A673 (cell line): ENCODE measurements at regions of chr1 and their contacts with region 1.

Region 1: DNA sequence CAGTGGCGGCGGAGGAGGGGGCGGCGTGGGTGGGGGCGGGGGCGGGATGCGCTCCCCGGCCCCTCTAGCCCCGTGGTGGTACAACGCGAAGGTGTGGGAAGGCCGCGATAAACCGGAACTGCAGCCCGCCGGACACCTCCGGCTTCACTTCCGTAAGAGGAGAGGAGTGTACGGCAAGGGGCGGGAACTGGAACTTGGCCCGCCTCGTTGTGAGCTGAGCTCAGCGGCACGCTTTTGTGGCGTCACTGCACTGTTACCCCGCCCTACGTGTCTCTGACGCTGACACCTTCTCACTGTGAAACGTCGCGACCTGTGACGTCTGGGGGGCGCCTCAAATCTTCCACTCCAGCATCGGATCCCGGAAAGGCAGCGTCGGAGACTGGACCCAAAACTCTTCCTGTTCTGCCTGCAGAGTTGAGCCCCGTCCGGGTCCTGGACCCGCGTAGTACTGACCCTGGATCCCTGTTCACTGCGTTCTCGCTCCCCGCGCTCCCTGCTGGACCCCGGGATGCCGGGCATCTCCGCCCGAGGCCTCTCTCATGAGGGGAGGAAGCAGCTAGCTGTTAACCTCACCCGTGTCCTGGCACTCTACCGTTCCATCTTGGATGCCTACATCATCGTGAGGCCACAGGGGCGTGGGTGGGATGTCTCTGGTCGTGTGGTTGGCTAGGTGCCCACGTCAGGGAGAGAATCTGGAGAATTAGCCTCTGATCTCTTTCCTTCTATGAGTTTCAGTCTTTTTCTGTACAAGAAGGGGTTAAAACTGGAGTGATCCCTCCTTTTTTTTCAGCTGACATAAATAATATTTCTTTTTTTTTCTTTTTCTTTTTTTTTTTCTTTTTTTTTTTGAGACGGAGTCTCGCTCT is at the start of gene ISG20L2:
- DNase-seq: peak; percentile 99
- H3K4me3 ChIP-seq: peak within 1 kb of the TSS; percentile 95
- H3K27ac ChIP-seq: peak within 1 kb of the TSS; percentile 96
- H3K4me1 ChIP-seq: peaks cover 23% of the 10 kb centered on the region
- H3K27me3 ChIP-seq: no peaks in the 10 kb centered on the region
- CTCF ChIP-seq: no peak
- total RNA-seq, gene ISG20L2: 45.7 and 46.5 TPM in 2 replicates

Region 2: GRCh38 chr1:156445789-156446263 is 283.0 kb before region 1 on chr1:
- CTCF ChIA-PET with region 1: no interaction called
- POLR2A ChIA-PET with region 1: no interaction called
- intact Hi-C with region 1: no loop called
- DNase-seq: peak; percentile 92
- H3K4me3 ChIP-seq: no peak overlapping the region
- H3K27ac ChIP-seq: no peak overlapping the region
- H3K4me1 ChIP-seq: no peaks in the 10 kb centered on the region
- H3K27me3 ChIP-seq: peaks cover 13% of the 10 kb centered on the region
- CTCF ChIP-seq: peak; percentile 97

Region 3: GRCh38 chr1:156689035-156689952 is 39.5 kb before region 1 on chr1:
- CTCF ChIA-PET with region 1: interaction called, 117 read pairs
- POLR2A ChIA-PET with region 1: interaction called, 11 read pairs
- intact Hi-C with region 1: loop called (anchors 1 kb)
- DNase-seq: peak; percentile 90
- H3K4me3 ChIP-seq: peak overlapping the region; percentile 39
- H3K27ac ChIP-seq: no peak overlapping the region
- H3K4me1 ChIP-seq: peaks cover 22% of the 10 kb centered on the region
- H3K27me3 ChIP-seq: peaks cover 4% of the 10 kb centered on the region
- CTCF ChIP-seq: peak; percentile 80

Region 4: DNA sequence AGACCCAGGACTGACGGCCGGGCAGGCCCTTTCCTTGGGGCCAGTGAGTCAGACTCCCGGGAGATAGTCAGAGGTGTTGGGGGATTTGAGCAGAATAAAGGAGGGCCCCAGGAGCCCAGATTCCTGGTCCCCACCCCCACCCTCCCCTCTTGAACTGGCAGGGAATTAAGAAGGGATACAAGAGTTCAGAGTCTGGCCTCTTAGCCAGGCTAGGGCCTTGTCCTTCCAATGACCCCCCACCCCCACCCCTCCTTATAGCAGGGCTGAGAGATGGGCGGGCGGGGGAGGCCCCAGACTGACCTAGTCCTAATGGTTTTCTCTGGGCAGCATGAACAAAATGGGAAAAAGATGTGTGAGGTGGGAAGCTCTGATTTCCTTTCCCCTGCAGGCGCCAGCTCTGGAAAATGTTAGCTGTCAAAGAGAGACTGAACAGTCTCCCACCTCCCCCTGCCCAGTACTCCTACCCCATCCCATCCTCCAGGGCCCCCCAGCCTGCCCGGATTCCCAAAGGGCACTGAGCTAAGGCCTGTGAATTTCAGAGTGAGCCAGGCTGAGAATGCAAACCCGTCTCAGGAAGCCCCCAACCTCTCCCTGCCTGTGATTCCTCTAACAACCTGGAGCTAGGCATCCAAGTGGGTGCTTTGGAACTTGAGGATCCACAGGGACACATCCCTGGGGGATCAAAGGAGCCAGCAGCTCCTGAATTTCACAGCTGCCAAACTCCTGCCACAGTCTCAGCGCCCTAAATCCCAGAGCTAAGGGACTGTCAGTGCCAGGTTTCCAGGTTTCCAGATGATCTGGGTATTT is 17.6 kb before region 1 on chr1:
- CTCF ChIA-PET with region 1: interaction called, 13 read pairs
- POLR2A ChIA-PET with region 1: no interaction called
- intact Hi-C with region 1: no loop called
- DNase-seq: no peak
- H3K4me3 ChIP-seq: no peak overlapping the region
- H3K27ac ChIP-seq: no peak overlapping the region
- H3K4me1 ChIP-seq: peaks cover 3% of the 10 kb centered on the region
- H3K27me3 ChIP-seq: no peaks in the 10 kb centered on the region
- CTCF ChIP-seq: no peak

Region 5: DNA sequence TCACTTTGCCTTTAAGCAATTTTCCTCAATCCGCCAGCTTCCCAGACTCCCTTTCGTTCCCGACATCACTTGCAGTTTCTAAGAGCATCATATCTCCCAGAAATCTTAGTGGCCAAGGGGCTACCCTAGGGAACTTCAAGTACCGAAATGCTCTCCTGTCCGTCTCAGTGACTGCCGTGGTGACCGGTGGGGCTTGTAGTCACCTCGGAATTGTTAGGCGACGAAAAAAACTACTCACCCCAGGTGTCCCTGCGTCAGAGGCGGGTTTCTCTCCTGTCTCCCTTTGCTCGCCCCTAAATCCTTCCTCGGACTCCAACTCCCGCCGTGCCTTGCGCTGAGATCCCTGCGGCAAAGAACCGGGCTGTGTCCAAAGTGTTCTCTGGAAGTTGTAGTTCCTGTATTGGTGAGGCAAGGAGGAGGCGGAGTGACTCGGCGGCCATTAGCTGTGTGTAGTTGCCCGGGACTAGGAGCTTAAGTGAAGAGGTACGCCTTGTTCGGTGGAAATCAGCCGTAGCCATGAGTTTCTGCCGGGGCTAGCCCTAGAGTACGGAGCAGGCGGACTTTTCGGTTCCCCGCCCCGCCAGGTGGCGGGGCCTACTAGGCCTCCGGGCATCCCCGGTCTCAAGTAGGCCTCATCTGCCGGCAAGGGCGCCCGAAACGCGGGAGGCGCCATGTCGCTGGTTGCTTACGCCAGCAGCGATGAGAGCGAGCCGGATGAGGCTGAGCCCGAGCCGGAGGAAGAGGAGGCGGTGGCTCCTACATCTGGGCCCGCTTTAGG is 38.5 kb after region 1 on chr1 and contains the start of gene PRCC:
- CTCF ChIA-PET with region 1: interaction called, 4 read pairs
- POLR2A ChIA-PET with region 1: no interaction called
- intact Hi-C with region 1: loop called (anchors 2 kb)
- DNase-seq: peak; percentile 100
- H3K4me3 ChIP-seq: peak within 1 kb of the TSS; percentile 89
- H3K27ac ChIP-seq: peak within 1 kb of the TSS; percentile 94
- H3K4me1 ChIP-seq: peaks cover 14% of the 10 kb centered on the region
- H3K27me3 ChIP-seq: no peaks in the 10 kb centered on the region
- CTCF ChIP-seq: no peak
- total RNA-seq, gene PRCC: 121 and 125 TPM in 2 replicates

Region 6: GRCh38 chr1:156892190-156893047 is 163.6 kb after region 1 on chr1:
- CTCF ChIA-PET with region 1: interaction called, 19 read pairs
- POLR2A ChIA-PET with region 1: no interaction called
- intact Hi-C with region 1: loop called (anchors 1 kb)
- DNase-seq: peak; percentile 93
- H3K4me3 ChIP-seq: peak overlapping the region; percentile 29
- H3K27ac ChIP-seq: no peak overlapping the region
- H3K4me1 ChIP-seq: no peaks in the 10 kb centered on the region
- H3K27me3 ChIP-seq: no peaks in the 10 kb centered on the region
- CTCF ChIP-seq: peak; percentile 96